Naive thymus-derived CD4-positive, alpha-beta T cell (primary cell): ENCODE measurements at regions of chr11 and their contacts with region 1.

Region 1: GRCh38 chr11:48043111-48043990 is 63.0 kb downstream of the PTPRJ start:
- DNase-seq: peak in 5 of 9 donors; percentile 34 to 51 (median 44)
- ATAC-seq: peak; percentile 70
- H3K4me3 ChIP-seq: peak overlapping the region; percentile 18
- H3K4me3 Mint-ChIP-seq: peak overlapping the region; percentile 44 to 82 (median 69)
- H3K27ac ChIP-seq: peak overlapping the region; percentile 59
- H3K27ac Mint-ChIP-seq: peak overlapping the region; percentile 67 to 91 (median 83)
- H3K4me1 ChIP-seq: peaks cover 14 to 29% of the 10 kb centered on the region in 2 donors
- H3K4me1 Mint-ChIP-seq: peaks cover 46 to 78% (median 74%) of the 10 kb centered on the region in 7 donors
- H3K27me3 ChIP-seq: no peaks in the 10 kb centered on the region
- H3K27me3 Mint-ChIP-seq: no peaks in the 10 kb centered on the region

Region 2: GRCh38 chr11:47907499-47907898 is 135.9 kb before region 1 on chr11:
- CTCF ChIA-PET with region 1: interaction called, 11 read pairs
- POLR2A ChIA-PET with region 1: no interaction called
- intact Hi-C with region 1: no loop called
- DNase-seq: no peak
- ATAC-seq: no peak
- H3K4me3 ChIP-seq: no peak overlapping the region
- H3K4me3 Mint-ChIP-seq: no peak overlapping the region
- H3K27ac ChIP-seq: no peak overlapping the region
- H3K27ac Mint-ChIP-seq: no peak overlapping the region
- H3K4me1 ChIP-seq: no peaks in the 10 kb centered on the region
- H3K4me1 Mint-ChIP-seq: peaks cover 0 to 16% (median 5%) of the 10 kb centered on the region in 7 donors
- H3K27me3 ChIP-seq: no peaks in the 10 kb centered on the region
- H3K27me3 Mint-ChIP-seq: peaks cover 0 to 3% (median 0%) of the 10 kb centered on the region in 5 donors

Region 3: GRCh38 chr11:48081151-48082010 is 38.0 kb after region 1 on chr11:
- CTCF ChIA-PET with region 1: interaction called, 5 read pairs
- POLR2A ChIA-PET with region 1: no interaction called
- intact Hi-C with region 1: loop called in 1 of 2 experiments (anchors 5 kb)
- DNase-seq: peak in 3 of 9 donors; percentile 3 to 44 (median 14)
- ATAC-seq: peak; percentile 81
- H3K4me3 ChIP-seq: no peak overlapping the region
- H3K4me3 Mint-ChIP-seq: peak overlapping the region in 7 of 10 donors; percentile 33 to 65 (median 60)
- H3K27ac ChIP-seq: no peak overlapping the region
- H3K27ac Mint-ChIP-seq: peak overlapping the region in 8 of 9 donors; percentile 21 to 83 (median 56)
- H3K4me1 ChIP-seq: peaks cover 0 to 10% of the 10 kb centered on the region in 2 donors
- H3K4me1 Mint-ChIP-seq: peaks cover 42 to 70% (median 64%) of the 10 kb centered on the region in 7 donors
- H3K27me3 ChIP-seq: no peaks in the 10 kb centered on the region
- H3K27me3 Mint-ChIP-seq: no peaks in the 10 kb centered on the region

Region 4: DNA sequence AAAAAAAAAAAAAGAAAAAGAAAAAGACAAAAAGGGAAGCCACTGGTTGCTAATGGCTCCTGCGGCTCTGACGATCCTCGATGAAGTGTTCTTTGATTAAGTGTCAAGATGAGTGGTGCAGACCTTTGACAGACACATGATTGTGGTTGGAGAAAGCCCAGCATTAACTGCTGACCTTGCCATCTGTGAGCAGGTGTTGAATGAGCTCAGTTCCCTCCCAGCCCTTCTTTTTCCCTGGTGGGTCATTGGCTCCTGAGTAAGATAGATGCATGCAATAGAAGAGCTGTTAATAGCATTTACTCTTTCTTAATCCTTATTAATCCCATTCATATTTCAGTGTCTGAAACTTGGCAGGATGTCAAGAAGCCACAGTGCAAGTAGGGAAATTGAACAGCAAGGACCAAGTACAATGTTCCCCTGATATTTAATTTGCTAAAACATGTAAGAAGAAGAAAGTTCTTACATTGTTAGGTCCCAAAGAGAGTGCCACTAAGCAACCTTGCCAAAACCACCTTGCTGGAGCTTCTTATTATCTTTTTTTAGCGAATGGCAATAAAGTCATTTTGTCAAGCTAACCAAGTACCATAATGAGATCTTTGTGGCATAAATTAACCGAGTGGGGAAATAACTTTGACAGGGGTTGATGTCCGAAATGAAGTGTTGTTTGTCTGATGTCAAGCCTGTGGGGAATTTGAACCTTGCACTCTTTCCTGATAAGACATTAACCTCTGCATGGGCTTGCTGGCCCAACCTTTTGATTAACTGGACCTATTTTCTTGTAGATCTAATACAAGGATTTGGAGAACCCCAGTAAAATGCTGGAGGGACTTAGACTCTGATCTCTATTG is 50.7 kb after region 1 on chr11:
- CTCF ChIA-PET with region 1: no interaction called
- POLR2A ChIA-PET with region 1: no interaction called
- intact Hi-C with region 1: no loop called
- DNase-seq: no peak
- ATAC-seq: no peak
- H3K4me3 ChIP-seq: no peak overlapping the region
- H3K4me3 Mint-ChIP-seq: no peak overlapping the region
- H3K27ac ChIP-seq: no peak overlapping the region
- H3K27ac Mint-ChIP-seq: peak overlapping the region in 4 of 9 donors; percentile 6 to 40 (median 34)
- H3K4me1 ChIP-seq: peaks cover 11 to 20% of the 10 kb centered on the region in 2 donors
- H3K4me1 Mint-ChIP-seq: peaks cover 30 to 78% (median 67%) of the 10 kb centered on the region in 7 donors
- H3K27me3 ChIP-seq: no peaks in the 10 kb centered on the region
- H3K27me3 Mint-ChIP-seq: no peaks in the 10 kb centered on the region